ENCODE measurements at regions of chr6 and their contacts with region 1.

Region 1: GRCh38 chr6:143427109-143427817 is 23.2 kb downstream of the ADAT2 start:
- DNase-seq: peak; percentile 30 to 71
- ATAC-seq: peak; percentile 99 to 100
- H3K4me3 ChIP-seq: no peak overlapping the region
- H3K27ac ChIP-seq: no peak overlapping the region
- H3K4me1 ChIP-seq: peaks cover 3% of the 10 kb centered on the region; the same call in 1 of the 3 replicates
- CTCF ChIP-seq: peak; percentile 78
- EP300 ChIP-seq: no peak
- POLR2A ChIP-seq: no peak
- RAD21 ChIP-seq: peak; percentile 93 to 95

Region 2: GRCh38 chr6:142474531-142475289 is 952.6 kb before region 1 on chr6:
- CTCF ChIA-PET with region 1: interaction called, 31 read pairs
- POLR2A ChIA-PET with region 1: no interaction called
- DNase-seq: peak; percentile 28 to 65
- ATAC-seq: peak; percentile 96 to 99
- H3K4me3 ChIP-seq: no peak overlapping the region
- H3K27ac ChIP-seq: peak overlapping the region in 1 of 2 experiments; percentile 63; a peak in 3 of 6 replicates
- H3K4me1 ChIP-seq: no peaks in the 10 kb centered on the region
- CTCF ChIP-seq: peak; percentile 82
- EP300 ChIP-seq: no peak
- POLR2A ChIP-seq: no peak
- RAD21 ChIP-seq: peak; percentile 82 to 83

Region 3: GRCh38 chr6:142692942-142693341 is 734.3 kb before region 1 on chr6:
- CTCF ChIA-PET with region 1: interaction called, 46 read pairs
- POLR2A ChIA-PET with region 1: no interaction called
- DNase-seq: peak; percentile 12 to 48
- ATAC-seq: peak; percentile 78 to 92; a peak in 5 of 6 replicates
- H3K4me3 ChIP-seq: no peak overlapping the region
- H3K27ac ChIP-seq: peak overlapping the region in 1 of 2 experiments; percentile 45; a peak in 2 of 6 replicates
- H3K4me1 ChIP-seq: peaks cover 10% of the 10 kb centered on the region; the same call in 2 of the 3 replicates
- CTCF ChIP-seq: peak; percentile 82
- EP300 ChIP-seq: no peak
- POLR2A ChIP-seq: no peak
- RAD21 ChIP-seq: peak; percentile 89 to 93

Region 4: DNA sequence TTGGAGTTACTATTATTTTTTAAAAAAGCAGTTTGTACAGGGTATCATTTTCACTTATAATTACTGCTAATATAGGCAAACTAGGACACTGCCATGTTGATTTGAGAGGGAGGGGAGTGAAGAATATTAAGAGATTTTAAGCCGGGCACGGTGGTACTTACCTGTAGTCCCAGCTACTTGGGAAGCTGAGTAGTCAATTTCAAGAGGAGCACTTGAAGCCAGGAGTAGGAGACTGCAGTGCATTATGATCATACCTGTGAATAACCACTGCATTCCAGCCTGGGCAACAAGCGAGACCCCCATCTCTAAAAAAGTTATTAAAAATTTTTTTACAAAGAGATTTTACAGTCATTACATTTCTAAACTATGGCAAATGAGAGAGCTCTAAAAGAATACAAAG is 12.5 kb before region 1 on chr6:
- CTCF ChIA-PET with region 1: interaction called, 25 read pairs
- POLR2A ChIA-PET with region 1: no interaction called
- DNase-seq: no peak
- ATAC-seq: no peak
- H3K4me3 ChIP-seq: no peak overlapping the region
- H3K27ac ChIP-seq: no peak overlapping the region
- H3K4me1 ChIP-seq: peaks cover 27% of the 10 kb centered on the region
- CTCF ChIP-seq: no peak
- EP300 ChIP-seq: no peak
- POLR2A ChIP-seq: no peak
- RAD21 ChIP-seq: no peak